Caco-2 (cell line): ENCODE measurements at regions of chr11 and their contacts with region 1.

Region 1: GRCh38 chr11:96098514-96099241 is 174.8 kb upstream of the MTMR2 start:
- DNase-seq: peak; percentile 90 to 91
- H3K4me3 ChIP-seq: no peak overlapping the region
- H3K4me3 Mint-ChIP-seq: peak overlapping the region; percentile 65
- H3K27ac Mint-ChIP-seq: peak overlapping the region; percentile 94
- H3K4me1 ChIP-seq: peaks cover 75% of the 10 kb centered on the region
- H3K4me1 Mint-ChIP-seq: peaks cover 71% of the 10 kb centered on the region
- H3K27me3 ChIP-seq: no peaks in the 10 kb centered on the region
- H3K27me3 Mint-ChIP-seq: no peaks in the 10 kb centered on the region
- CTCF ChIP-seq: no peak

Region 2: GRCh38 chr11:96054870-96055705 is 43.6 kb before region 1 on chr11:
- CTCF ChIA-PET with region 1: interaction called, 3 read pairs
- POLR2A ChIA-PET with region 1: no interaction called
- intact Hi-C with region 1: loop called (anchors 1 kb)
- DNase-seq: peak in 1 of 2 experiments; percentile 48
- H3K4me3 ChIP-seq: no peak overlapping the region
- H3K4me3 Mint-ChIP-seq: no peak overlapping the region
- H3K27ac Mint-ChIP-seq: no peak overlapping the region
- H3K4me1 ChIP-seq: peaks cover 44% of the 10 kb centered on the region
- H3K4me1 Mint-ChIP-seq: peaks cover 43% of the 10 kb centered on the region
- H3K27me3 ChIP-seq: no peaks in the 10 kb centered on the region
- H3K27me3 Mint-ChIP-seq: no peaks in the 10 kb centered on the region
- CTCF ChIP-seq: peak; percentile 77 to 81

Region 3: GRCh38 chr11:96149743-96150555 is 51.3 kb after region 1 on chr11:
- CTCF ChIA-PET with region 1: no interaction called
- POLR2A ChIA-PET with region 1: no interaction called
- intact Hi-C with region 1: loop called (anchors 1 kb)
- DNase-seq: no peak
- H3K4me3 ChIP-seq: no peak overlapping the region
- H3K4me3 Mint-ChIP-seq: no peak overlapping the region
- H3K27ac Mint-ChIP-seq: no peak overlapping the region
- H3K4me1 ChIP-seq: peaks cover 59% of the 10 kb centered on the region
- H3K4me1 Mint-ChIP-seq: peaks cover 35% of the 10 kb centered on the region
- H3K27me3 ChIP-seq: no peaks in the 10 kb centered on the region
- H3K27me3 Mint-ChIP-seq: no peaks in the 10 kb centered on the region
- CTCF ChIP-seq: no peak

Region 4: GRCh38 chr11:96188243-96189006 is 89.7 kb after region 1 on chr11:
- CTCF ChIA-PET with region 1: no interaction called
- POLR2A ChIA-PET with region 1: no interaction called
- intact Hi-C with region 1: no loop called
- DNase-seq: no peak
- H3K4me3 ChIP-seq: no peak overlapping the region
- H3K4me3 Mint-ChIP-seq: no peak overlapping the region
- H3K27ac Mint-ChIP-seq: peak overlapping the region; percentile 30
- H3K4me1 ChIP-seq: peaks cover 10% of the 10 kb centered on the region
- H3K4me1 Mint-ChIP-seq: peaks cover 10% of the 10 kb centered on the region
- H3K27me3 ChIP-seq: no peaks in the 10 kb centered on the region
- H3K27me3 Mint-ChIP-seq: no peaks in the 10 kb centered on the region
- CTCF ChIP-seq: no peak

Region 5: DNA sequence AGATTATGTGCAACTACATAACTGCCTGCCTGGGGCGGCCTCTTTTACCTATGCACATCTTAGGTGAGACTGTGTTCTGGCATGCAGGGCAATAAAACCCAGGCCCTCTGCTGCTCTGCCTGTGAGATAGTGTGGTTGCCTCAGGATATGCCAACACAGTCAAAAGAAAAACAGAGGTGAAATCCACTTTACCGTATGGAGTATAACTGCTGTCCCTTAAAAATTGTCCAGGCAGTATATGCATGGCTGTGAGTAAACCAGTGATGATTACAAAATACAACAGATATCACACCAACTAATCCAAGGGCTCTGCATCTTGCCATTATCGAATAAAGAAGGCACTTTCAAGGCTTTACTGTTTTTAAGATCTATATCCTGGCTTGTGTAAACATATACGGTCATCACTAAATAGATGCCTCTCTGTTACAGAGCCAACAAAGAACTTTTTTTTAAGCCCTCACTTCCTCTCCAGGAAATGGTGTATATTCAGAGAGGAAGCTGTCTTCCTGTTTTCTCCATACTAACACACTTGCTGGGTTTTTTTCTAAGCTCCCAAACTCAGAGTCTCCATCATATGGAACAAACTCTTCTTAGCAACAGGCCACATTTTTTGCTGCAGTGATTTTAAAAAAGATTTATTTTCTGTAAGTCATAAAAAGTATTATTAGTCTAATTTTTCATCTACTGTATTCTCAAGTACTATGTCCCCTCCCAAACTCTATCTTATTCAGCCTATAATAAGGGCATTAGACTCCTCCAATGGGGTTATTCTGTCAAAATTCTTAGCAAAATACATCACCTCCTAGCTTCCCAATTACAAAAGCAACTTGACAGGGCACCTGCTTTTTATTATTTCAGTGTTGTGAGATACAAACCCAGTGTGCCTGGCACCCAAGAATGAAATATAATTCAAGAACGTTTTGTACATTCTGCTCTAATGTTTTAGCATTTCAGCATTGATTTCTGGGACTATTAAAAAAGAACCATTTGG is 109.1 kb after region 1 on chr11:
- CTCF ChIA-PET with region 1: no interaction called
- POLR2A ChIA-PET with region 1: no interaction called
- intact Hi-C with region 1: loop called (anchors 1 kb)
- DNase-seq: peak; percentile 75 to 87
- H3K4me3 ChIP-seq: no peak overlapping the region
- H3K4me3 Mint-ChIP-seq: no peak overlapping the region
- H3K27ac Mint-ChIP-seq: peak overlapping the region; percentile 37
- H3K4me1 ChIP-seq: peaks cover 34% of the 10 kb centered on the region
- H3K4me1 Mint-ChIP-seq: peaks cover 35% of the 10 kb centered on the region
- H3K27me3 ChIP-seq: no peaks in the 10 kb centered on the region
- H3K27me3 Mint-ChIP-seq: no peaks in the 10 kb centered on the region
- CTCF ChIP-seq: no peak

Region 6: DNA sequence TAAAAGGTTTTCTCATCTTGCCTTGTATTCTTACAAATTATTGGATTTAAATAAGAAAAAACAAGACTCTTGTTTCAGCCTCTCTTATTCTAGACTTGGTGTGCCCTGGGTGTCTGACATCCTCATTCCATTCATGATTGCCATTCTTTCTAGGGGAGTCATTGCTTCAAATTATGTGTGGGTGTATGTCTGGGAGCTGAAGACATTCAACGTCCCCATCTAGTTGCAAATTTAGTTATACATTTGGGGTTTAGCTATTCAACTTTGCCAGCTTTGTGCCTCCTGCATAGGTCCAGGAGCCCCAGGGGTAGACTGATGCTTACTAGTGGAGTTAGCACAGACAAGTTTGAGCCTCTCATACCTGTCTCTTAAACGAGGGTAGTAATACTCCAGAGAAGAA is 226.3 kb after region 1 on chr11:
- CTCF ChIA-PET with region 1: no interaction called
- POLR2A ChIA-PET with region 1: no interaction called
- intact Hi-C with region 1: loop called (anchors 5 kb)
- DNase-seq: peak in 1 of 2 experiments; percentile 52
- H3K4me3 ChIP-seq: no peak overlapping the region
- H3K4me3 Mint-ChIP-seq: peak overlapping the region; percentile 3
- H3K27ac Mint-ChIP-seq: peak overlapping the region; percentile 97
- H3K4me1 ChIP-seq: peaks cover 82% of the 10 kb centered on the region
- H3K4me1 Mint-ChIP-seq: peaks cover 65% of the 10 kb centered on the region
- H3K27me3 ChIP-seq: no peaks in the 10 kb centered on the region
- H3K27me3 Mint-ChIP-seq: no peaks in the 10 kb centered on the region
- CTCF ChIP-seq: no peak

Region 7: GRCh38 chr11:96424693-96425092 is 326.0 kb after region 1 on chr11:
- CTCF ChIA-PET with region 1: no interaction called
- POLR2A ChIA-PET with region 1: no interaction called
- intact Hi-C with region 1: loop called (anchors 1 kb)
- DNase-seq: no peak
- H3K4me3 ChIP-seq: no peak overlapping the region
- H3K4me3 Mint-ChIP-seq: no peak overlapping the region
- H3K27ac Mint-ChIP-seq: no peak overlapping the region
- H3K4me1 ChIP-seq: peaks cover 5% of the 10 kb centered on the region; the same call in 1 of the 2 replicates
- H3K4me1 Mint-ChIP-seq: no peaks in the 10 kb centered on the region
- H3K27me3 ChIP-seq: no peaks in the 10 kb centered on the region; the same call in 1 of the 2 replicates
- H3K27me3 Mint-ChIP-seq: peaks cover 19% of the 10 kb centered on the region
- CTCF ChIP-seq: no peak